ENCODE measurements at regions of chr18 and their contacts with region 1.

Region 1: GRCh38 chr18:59109375-59109774 is 30.3 kb upstream of the SEC11C start:
- DNase-seq: no peak
- ATAC-seq: no peak
- H3K4me3 ChIP-seq: no peak overlapping the region
- H3K4me3 Mint-ChIP-seq: no peak overlapping the region
- H3K27ac ChIP-seq: no peak overlapping the region
- H3K27ac Mint-ChIP-seq: no peak overlapping the region
- H3K4me1 ChIP-seq: no peaks in the 10 kb centered on the region
- H3K4me1 Mint-ChIP-seq: no peaks in the 10 kb centered on the region
- H3K27me3 ChIP-seq: peaks cover 0 to 39% (median 35%) of the 10 kb centered on the region in 4 experiments
- H3K27me3 Mint-ChIP-seq: peaks cover 72% of the 10 kb centered on the region
- CTCF ChIP-seq: no peak

Region 2: DNA sequence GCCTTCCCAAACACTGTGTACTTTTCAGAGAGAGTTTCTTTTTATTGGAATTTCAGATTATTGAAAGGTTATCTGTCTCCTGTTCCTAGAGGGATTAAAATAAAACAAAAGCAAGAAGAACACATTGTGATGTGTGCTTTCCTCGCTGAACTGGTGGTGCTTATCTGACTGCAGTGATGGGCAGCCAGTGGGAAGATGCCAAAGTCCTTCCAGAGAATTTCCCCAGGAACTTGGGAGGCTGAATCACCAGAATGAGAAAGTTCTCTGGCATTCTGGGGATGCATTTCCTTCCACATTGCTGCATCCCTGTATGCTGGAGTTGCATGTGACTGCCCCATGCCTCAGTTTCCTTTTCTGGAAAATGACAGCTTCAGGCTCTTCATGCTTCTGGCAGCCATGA is 23.6 kb before region 1 on chr18:
- CTCF ChIA-PET with region 1: interaction called, 12 read pairs
- POLR2A ChIA-PET with region 1: no interaction called
- intact Hi-C with region 1: no loop called
- DNase-seq: no peak
- ATAC-seq: no peak
- H3K4me3 ChIP-seq: no peak overlapping the region
- H3K4me3 Mint-ChIP-seq: no peak overlapping the region
- H3K27ac ChIP-seq: no peak overlapping the region
- H3K27ac Mint-ChIP-seq: no peak overlapping the region
- H3K4me1 ChIP-seq: peaks cover 15 to 19% of the 10 kb centered on the region in 2 donors
- H3K4me1 Mint-ChIP-seq: peaks cover 29% of the 10 kb centered on the region
- H3K27me3 ChIP-seq: peaks cover 0 to 5% (median 0%) of the 10 kb centered on the region in 4 experiments
- H3K27me3 Mint-ChIP-seq: peaks cover 6% of the 10 kb centered on the region
- CTCF ChIP-seq: no peak

Measured in B cell (primary cell).